Activated naive CD4-positive, alpha-beta T cell treated with anti-CD3 and anti-CD28 coated beads for 36 hours (primary cell): ENCODE measurements at regions of chr1 and their contacts with region 1.

Region 1: DNA sequence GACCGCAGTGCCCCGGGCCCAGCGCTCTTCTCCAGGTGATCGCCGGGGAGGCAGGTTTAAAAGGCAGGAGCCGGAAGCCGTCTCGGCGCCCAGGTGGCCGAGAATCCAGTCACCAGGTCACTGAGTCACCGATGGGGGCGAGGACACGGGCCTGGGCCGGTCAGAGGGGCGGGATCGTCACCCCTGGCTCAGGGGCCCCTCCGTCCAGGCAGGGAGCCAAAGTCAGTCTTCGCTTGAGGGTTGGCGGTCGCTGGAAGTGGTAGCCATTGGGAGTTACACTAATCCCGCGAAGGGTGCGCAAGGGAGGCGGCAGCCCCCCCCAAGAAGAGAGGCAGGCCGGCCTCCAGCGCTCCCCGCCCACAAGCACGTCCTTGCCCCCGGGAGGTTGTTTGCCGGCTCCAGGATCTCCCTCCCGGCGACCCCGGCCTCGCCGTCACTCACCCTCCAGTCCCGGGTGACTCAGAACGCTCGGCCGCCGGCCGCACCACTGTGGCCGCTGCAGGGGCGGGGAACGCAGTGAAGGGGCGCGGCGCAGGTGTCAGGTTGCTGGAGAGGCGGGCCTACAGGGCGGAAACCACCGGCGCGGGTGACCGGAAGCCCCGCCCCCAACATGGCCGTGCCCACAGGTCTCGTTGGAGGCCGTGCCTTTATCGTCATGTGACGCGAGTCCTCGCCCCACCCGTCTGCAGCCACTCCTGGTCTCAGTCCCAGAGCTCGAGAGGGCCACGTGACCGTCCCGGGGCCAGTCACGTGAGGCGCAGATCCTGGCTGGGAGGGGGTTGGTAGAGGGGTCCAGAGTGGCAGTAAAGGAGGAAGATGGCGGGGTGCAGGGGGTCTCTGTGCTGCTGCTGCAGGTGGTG is at the starts of genes CLCN6 and MTHFR:
- DNase-seq: peak; percentile 99
- H3K4me3 Mint-ChIP-seq: peak within 1 kb of the TSS; percentile 99
- H3K27ac Mint-ChIP-seq: peak within 1 kb of the TSS; percentile 96
- H3K4me1 Mint-ChIP-seq: peaks cover 59% of the 10 kb centered on the region
- H3K27me3 Mint-ChIP-seq: no peaks in the 10 kb centered on the region
- total RNA-seq, gene CLCN6: 11.3 to 11.6 TPM
- total RNA-seq, gene MTHFR: 7.1 to 7.9 TPM

Region 2: GRCh38 chr1:11059990-11060830 is 745.5 kb before region 1 on chr1 and contains the start of gene SRM:
- CTCF ChIA-PET with region 1: no interaction called
- intact Hi-C with region 1: loop called (anchors 1 kb)
- DNase-seq: peak; percentile 89
- H3K4me3 Mint-ChIP-seq: peak within 1 kb of the TSS; percentile 95
- H3K27ac Mint-ChIP-seq: peak within 1 kb of the TSS; percentile 82
- H3K4me1 Mint-ChIP-seq: peaks cover 45% of the 10 kb centered on the region
- H3K27me3 Mint-ChIP-seq: no peaks in the 10 kb centered on the region
- total RNA-seq, gene SRM: 207 to 222 TPM

Region 3: GRCh38 chr1:11735854-11736745 is 69.6 kb before region 1 on chr1 and contains the start of gene AGTRAP:
- CTCF ChIA-PET with region 1: no interaction called
- intact Hi-C with region 1: loop called (anchors 2 kb)
- DNase-seq: peak; percentile 92
- H3K4me3 Mint-ChIP-seq: peak within 1 kb of the TSS; percentile 96
- H3K27ac Mint-ChIP-seq: peak within 1 kb of the TSS; percentile 93
- H3K4me1 Mint-ChIP-seq: peaks cover 51% of the 10 kb centered on the region
- H3K27me3 Mint-ChIP-seq: no peaks in the 10 kb centered on the region
- total RNA-seq, gene AGTRAP: 20.3 to 21.7 TPM

Region 4: DNA sequence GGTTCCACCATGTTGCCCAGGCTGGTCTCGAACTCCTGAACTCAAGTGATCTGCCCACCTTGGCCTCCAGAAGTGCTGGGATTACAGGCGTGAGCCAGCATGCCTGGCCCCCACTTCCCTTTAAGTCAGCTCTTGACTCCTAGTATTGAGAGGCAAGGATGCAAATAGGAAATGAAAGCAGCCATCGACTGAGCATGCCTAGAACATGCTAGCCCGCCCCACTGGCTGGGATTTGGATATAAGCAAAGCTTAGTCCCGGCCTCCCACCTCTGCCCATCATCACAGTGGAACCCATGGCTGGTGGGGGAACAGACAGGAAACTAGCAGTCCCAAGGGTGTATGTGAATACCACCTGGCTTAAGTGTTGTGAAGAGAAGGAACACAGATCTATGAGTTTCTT is 33.2 kb before region 1 on chr1:
- CTCF ChIA-PET with region 1: no interaction called
- intact Hi-C with region 1: no loop called
- DNase-seq: no peak
- H3K4me3 Mint-ChIP-seq: no peak overlapping the region
- H3K27ac Mint-ChIP-seq: no peak overlapping the region
- H3K4me1 Mint-ChIP-seq: no peaks in the 10 kb centered on the region
- H3K27me3 Mint-ChIP-seq: no peaks in the 10 kb centered on the region

Region 5: DNA sequence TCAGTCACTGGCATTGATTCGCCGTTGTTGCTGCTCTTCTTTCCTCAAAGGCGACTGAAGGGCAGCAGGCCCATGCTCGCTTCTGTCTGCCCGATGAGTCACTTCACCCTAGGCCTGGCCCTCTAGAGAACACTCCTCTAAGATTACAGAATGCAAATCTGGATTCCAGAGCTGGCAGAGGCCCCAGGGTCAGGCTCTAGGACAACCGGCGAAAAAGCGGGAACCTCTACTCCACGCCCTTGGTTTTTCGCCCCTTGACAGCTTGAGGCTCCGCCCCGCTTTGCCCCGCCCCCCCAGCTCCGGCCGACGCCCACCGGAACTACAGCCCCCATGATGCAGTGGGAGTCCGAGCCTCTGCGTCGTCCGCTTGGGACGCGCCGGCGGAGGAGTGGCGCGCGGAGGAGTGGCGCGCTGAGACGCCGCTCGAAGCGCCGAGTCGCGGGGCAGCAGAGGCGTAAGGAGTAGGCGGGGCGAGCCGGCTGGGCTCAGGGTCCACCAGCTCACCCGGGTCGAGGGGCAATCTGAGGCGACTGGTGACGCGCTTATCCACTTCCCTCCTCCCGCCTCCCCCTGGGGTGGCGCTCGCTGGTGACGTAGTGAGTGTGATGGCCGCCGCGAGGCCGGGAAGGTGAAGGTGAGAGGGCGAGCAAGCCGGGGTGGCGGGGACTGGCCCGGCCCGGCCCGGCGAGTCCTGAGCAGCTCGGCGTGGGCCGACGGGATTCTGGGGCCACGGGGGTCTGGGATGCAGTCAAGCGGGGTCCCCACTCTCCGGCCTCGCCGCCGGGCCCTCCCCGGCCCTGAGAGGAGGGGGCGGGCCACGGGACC is 174.4 kb after region 1 on chr1 and contains the start of gene MFN2:
- CTCF ChIA-PET with region 1: no interaction called
- intact Hi-C with region 1: loop called (anchors 1 kb)
- DNase-seq: peak; percentile 94
- H3K4me3 Mint-ChIP-seq: peak within 1 kb of the TSS; percentile 97
- H3K27ac Mint-ChIP-seq: peak within 1 kb of the TSS; percentile 92
- H3K4me1 Mint-ChIP-seq: peaks cover 47% of the 10 kb centered on the region
- H3K27me3 Mint-ChIP-seq: no peaks in the 10 kb centered on the region
- total RNA-seq, gene MFN2: 47.4 to 52.3 TPM

Region 6: GRCh38 chr1:12019858-12020509 is 214.3 kb after region 1 on chr1:
- CTCF ChIA-PET with region 1: no interaction called
- intact Hi-C with region 1: loop called (anchors 1 kb)
- DNase-seq: no peak
- H3K4me3 Mint-ChIP-seq: peak overlapping the region; percentile 82
- H3K27ac Mint-ChIP-seq: peak overlapping the region; percentile 56
- H3K4me1 Mint-ChIP-seq: peaks cover 8% of the 10 kb centered on the region
- H3K27me3 Mint-ChIP-seq: no peaks in the 10 kb centered on the region